Activated CD8-positive, alpha-beta memory T cell treated with anti-CD3 and anti-CD28 coated beads, Interleukin-2, amount 10 ng/mL, durations not matched to agents 7 days and 5 days (primary cell): ENCODE measurements at regions of chr1 and their contacts with region 1.

Region 1: GRCh38 chr1:203702130-203702577 is 62.8 kb upstream of the LAX1 start:
- DNase-seq: peak; percentile 70
- ATAC-seq: peak; percentile 78
- H3K4me3 Mint-ChIP-seq: no peak overlapping the region
- H3K27ac Mint-ChIP-seq: peak overlapping the region; percentile 48
- H3K4me1 Mint-ChIP-seq: peaks cover 26% of the 10 kb centered on the region
- H3K27me3 Mint-ChIP-seq: no peaks in the 10 kb centered on the region

Region 2: DNA sequence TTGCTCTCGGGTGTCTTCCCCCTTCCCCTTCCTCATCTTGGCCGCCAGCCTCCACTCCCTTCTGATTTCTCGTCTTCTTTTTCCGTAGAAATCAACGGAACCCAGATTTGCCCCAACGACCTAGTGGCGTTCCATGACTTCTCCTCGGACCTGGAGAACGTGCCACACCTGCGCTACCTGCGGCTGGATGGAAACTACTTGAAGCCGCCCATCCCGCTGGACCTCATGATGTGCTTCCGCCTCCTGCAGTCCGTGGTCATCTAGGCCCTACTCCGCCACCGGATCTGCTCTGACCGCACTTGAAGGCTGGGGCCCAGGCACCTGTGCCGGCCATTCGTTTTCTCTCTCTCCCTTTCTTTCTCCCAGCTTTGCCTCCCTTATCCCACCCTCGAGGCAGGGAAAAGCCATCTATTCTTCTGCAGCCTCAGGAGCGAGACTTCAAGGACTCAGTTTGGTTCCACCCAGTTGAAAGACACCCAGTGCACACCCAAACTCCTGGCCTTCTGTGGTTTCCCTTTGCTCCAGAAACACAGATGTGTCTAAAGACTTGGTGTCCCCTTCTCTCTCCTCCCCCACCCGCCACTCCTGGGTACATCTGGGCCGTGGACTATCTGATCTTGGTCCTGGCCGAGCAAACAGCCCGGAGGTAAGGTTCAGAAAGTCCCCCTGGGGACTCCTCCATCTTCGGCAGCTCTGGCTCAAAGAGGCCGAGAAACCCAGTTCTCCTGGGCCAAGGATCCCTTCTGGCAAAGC is 215.4 kb before region 1 on chr1:
- CTCF ChIA-PET with region 1: interaction called, 11 read pairs
- DNase-seq: no peak
- ATAC-seq: no peak
- H3K4me3 Mint-ChIP-seq: no peak overlapping the region
- H3K27ac Mint-ChIP-seq: no peak overlapping the region
- H3K4me1 Mint-ChIP-seq: peaks cover 4% of the 10 kb centered on the region
- H3K27me3 Mint-ChIP-seq: peaks cover under 1% of the 10 kb centered on the region

Region 3: DNA sequence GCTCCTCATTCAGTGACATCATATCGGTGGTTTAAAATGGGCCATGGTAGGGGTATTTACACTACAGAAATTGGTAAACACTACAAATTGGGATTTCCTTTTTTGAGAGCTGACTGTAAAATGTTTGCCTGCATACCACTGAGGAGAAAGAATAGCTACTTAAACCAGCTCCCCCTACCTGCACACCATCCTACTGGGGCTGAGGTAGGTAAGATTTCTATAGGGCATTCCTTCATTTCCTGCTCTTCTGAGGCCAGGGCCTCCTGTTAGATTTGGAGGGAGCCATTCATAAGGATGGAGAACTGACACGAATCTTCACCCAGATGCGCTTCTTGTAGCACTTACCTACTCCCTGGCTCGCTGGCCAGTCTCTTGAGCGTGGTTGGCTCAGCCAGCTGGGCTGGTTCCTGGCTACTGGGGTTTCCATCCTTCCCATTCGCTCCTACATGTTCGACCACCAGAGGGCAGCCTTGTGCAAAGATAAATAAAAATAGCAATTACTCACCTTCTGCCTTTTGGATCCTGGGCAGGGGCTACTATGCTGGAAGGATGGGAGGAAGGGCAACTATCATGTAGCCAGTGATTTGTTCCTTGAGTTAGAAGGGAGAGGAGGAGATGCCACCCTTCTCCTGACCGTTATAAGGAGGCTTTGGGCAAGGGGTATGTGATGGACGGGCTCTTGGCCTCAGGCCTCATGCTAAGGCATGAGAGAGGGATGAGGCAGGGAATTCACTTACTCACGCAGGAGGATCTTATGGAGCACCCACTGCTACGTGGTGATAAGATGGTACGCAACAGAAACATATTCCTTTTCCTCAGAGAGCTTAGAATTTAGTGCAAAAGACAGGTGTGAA is 197.5 kb before region 1 on chr1:
- CTCF ChIA-PET with region 1: interaction called, 77 read pairs
- DNase-seq: peak; percentile 84
- ATAC-seq: peak; percentile 85
- H3K4me3 Mint-ChIP-seq: no peak overlapping the region
- H3K27ac Mint-ChIP-seq: no peak overlapping the region
- H3K4me1 Mint-ChIP-seq: peaks cover 6% of the 10 kb centered on the region
- H3K27me3 Mint-ChIP-seq: peaks cover 14% of the 10 kb centered on the region

Region 4: DNA sequence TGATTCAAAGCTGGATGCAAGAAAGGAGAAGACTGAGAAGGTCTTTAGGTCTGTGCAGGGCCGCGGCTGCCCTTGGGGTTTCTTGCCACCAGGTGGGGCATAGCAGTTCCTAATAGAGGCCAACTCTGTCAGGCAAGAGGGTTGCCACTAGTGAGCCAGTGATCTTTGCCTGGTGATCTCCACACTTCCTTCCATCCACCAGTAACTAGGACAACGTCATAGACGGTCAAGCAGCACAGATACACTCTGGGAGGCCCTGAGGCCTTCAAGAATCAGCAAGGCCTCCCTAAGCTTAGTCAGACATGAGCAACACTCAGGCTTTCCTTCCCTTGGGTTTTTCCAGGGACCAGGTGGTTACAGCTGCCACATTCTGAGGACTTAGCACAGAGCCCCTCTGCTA is 108.4 kb before region 1 on chr1:
- CTCF ChIA-PET with region 1: interaction called, 38 read pairs
- DNase-seq: peak; percentile 78
- ATAC-seq: peak; percentile 92
- H3K4me3 Mint-ChIP-seq: no peak overlapping the region
- H3K27ac Mint-ChIP-seq: peak overlapping the region; percentile 13
- H3K4me1 Mint-ChIP-seq: peaks cover 23% of the 10 kb centered on the region
- H3K27me3 Mint-ChIP-seq: peaks cover 3% of the 10 kb centered on the region

Region 5: DNA sequence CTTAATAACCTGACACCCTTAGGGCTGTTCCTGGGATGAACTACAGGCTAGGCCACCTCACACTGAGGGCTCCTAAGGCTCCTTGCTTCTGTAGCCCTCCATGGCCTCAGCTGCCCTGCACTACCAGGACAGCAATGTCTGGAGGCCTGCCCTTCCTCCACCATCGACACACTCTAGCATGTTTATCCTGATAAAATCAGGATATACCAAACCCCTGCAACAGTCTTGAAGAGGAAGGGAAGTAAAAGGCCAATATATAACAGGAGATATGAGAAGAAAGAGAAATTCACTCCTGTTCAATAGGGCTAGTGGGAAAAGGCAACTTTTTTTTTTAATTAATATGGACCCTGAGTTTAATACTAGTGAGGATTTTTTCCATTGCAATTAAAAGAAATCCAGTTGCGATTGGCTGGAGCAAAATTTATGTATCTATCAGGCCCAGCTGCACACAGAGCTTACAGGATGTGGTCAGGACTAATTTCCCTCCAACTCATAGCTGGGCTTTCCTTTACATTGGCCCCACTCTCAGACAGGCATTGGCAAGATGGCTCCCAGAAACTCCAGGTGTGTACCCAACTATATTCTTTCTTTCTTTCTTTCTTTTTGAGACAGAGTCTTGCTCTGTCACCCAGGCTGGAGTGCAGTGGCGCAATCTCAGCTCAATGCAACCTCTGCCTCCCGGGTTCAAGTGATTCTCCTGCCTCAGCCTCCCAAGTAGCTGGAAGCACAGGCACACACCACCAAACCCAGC is 89.0 kb before region 1 on chr1:
- CTCF ChIA-PET with region 1: interaction called, 13 read pairs
- DNase-seq: peak; percentile 65
- ATAC-seq: peak; percentile 88
- H3K4me3 Mint-ChIP-seq: peak overlapping the region; percentile 54
- H3K27ac Mint-ChIP-seq: peak overlapping the region; percentile 87
- H3K4me1 Mint-ChIP-seq: peaks cover 57% of the 10 kb centered on the region
- H3K27me3 Mint-ChIP-seq: no peaks in the 10 kb centered on the region

Region 6: GRCh38 chr1:203673550-203674427 is 28.4 kb before region 1 on chr1:
- CTCF ChIA-PET with region 1: interaction called, 29 read pairs
- DNase-seq: peak; percentile 94
- ATAC-seq: peak; percentile 91
- H3K4me3 Mint-ChIP-seq: peak overlapping the region; percentile 69
- H3K27ac Mint-ChIP-seq: peak overlapping the region; percentile 98
- H3K4me1 Mint-ChIP-seq: peaks cover 77% of the 10 kb centered on the region
- H3K27me3 Mint-ChIP-seq: no peaks in the 10 kb centered on the region

Region 7: GRCh38 chr1:203682473-203683383 is 19.4 kb before region 1 on chr1:
- CTCF ChIA-PET with region 1: interaction called, 19 read pairs
- DNase-seq: peak; percentile 86
- ATAC-seq: peak; percentile 92
- H3K4me3 Mint-ChIP-seq: no peak overlapping the region
- H3K27ac Mint-ChIP-seq: peak overlapping the region; percentile 90
- H3K4me1 Mint-ChIP-seq: peaks cover 48% of the 10 kb centered on the region
- H3K27me3 Mint-ChIP-seq: no peaks in the 10 kb centered on the region

Region 8: GRCh38 chr1:203795441-203796235 is 93.5 kb after region 1 on chr1 and contains the starts of genes ZBED6 and ZC3H11A:
- CTCF ChIA-PET with region 1: no interaction called
- DNase-seq: peak; percentile 100
- ATAC-seq: peak; percentile 100
- H3K4me3 Mint-ChIP-seq: peak within 1 kb of the TSS; percentile 88
- H3K27ac Mint-ChIP-seq: peak within 1 kb of the TSS; percentile 96
- H3K4me1 Mint-ChIP-seq: peaks cover 41% of the 10 kb centered on the region
- H3K27me3 Mint-ChIP-seq: no peaks in the 10 kb centered on the region
- total RNA-seq, gene ZBED6: 18.6 to 21.1 TPM
- total RNA-seq, gene ZC3H11A: 98.5 to 99.5 TPM